ENCODE measurements at regions of chr2 and their contacts with region 1.

Region 1: GRCh38 chr2:64523666-64524603 is at the start of gene AFTPH:
- DNase-seq: peak; percentile 98
- ATAC-seq: peak; percentile 86
- H3K4me3 ChIP-seq: peak within 1 kb of the TSS; percentile 95
- H3K27ac ChIP-seq: peak within 1 kb of the TSS; percentile 94
- H3K4me1 ChIP-seq: peaks cover 11% of the 10 kb centered on the region
- H3K27me3 ChIP-seq: no peaks in the 10 kb centered on the region
- CTCF ChIP-seq: no peak
- EP300 ChIP-seq: peak in 1 of 2 experiments; percentile 53; a peak in 2 of 4 replicates
- POLR2A ChIP-seq: peak; percentile 84
- RAD21 ChIP-seq: no peak
- polyA plus RNA-seq, gene AFTPH: 25.6 to 38.7 TPM

Region 2: DNA sequence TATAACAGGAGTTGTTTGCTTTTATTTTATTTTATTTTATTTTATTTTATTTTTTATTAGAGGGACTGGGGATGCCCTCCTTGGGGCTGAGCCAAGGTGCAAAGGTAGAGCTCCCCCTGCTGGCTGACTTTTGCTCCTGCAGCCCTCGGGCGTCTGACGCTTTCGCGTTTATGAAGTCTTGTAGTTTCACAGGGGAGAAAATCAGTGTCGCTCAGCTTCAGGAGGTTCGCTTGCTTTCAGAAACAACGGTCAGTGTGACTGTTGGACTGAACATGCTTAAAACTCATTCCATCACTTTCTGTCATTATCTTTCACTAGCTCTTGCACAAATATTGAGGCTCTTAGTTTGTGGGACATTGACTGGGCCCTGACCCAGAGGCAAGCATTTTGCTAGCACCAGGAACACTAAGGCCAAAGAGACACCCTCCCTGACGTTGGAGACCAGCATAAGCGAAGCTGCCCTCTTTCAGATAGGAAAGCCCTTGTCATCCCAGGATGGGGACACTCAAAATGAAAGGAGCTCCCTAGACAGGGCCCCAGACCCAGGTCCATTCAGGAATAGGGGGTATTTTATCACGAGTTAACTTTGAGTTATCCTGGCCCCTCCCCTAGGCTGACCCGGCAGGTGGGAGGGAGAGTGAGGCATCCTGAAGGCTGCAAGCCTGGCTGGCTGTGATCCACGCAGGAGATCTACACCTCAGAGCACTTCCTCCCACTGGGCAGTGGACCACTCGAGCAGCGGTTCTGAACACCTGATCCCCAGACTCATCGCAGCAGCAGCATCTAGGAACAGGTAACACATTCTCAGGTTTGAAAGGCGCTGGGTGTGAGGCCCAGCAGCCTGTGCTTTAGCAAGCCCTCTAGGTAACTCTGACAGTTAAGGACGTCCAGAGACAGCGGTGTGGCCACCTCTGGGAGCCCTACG is 35.6 kb before region 1 on chr2:
- CTCF ChIA-PET with region 1: interaction called, 13 read pairs
- POLR2A ChIA-PET with region 1: no interaction called
- RAD21 ChIA-PET with region 1: interaction called, 3 read pairs
- SMC1A ChIA-PET with region 1: interaction called, 7 read pairs
- in situ Hi-C with region 1: no loop called
- intact Hi-C with region 1: no loop called
- DNase-seq: peak; percentile 12
- ATAC-seq: peak; percentile 94
- H3K4me3 ChIP-seq: no peak overlapping the region
- H3K27ac ChIP-seq: no peak overlapping the region
- H3K4me1 ChIP-seq: peaks cover 5% of the 10 kb centered on the region
- H3K27me3 ChIP-seq: no peaks in the 10 kb centered on the region
- CTCF ChIP-seq: peak; percentile 84 to 92 (median 91)
- EP300 ChIP-seq: no peak
- POLR2A ChIP-seq: no peak
- RAD21 ChIP-seq: peak; percentile 90

Region 3: GRCh38 chr2:64562148-64562784 is 38.3 kb after region 1 on chr2:
- CTCF ChIA-PET with region 1: interaction called, 145 read pairs
- POLR2A ChIA-PET with region 1: interaction called, 7 read pairs
- RAD21 ChIA-PET with region 1: interaction called, 93 read pairs
- SMC1A ChIA-PET with region 1: interaction called, 106 read pairs
- in situ Hi-C with region 1: no loop called
- intact Hi-C with region 1: loop called (anchors 1 kb)
- DNase-seq: no peak
- ATAC-seq: peak; percentile 70
- H3K4me3 ChIP-seq: no peak overlapping the region
- H3K27ac ChIP-seq: no peak overlapping the region
- H3K4me1 ChIP-seq: peaks cover 19% of the 10 kb centered on the region
- H3K27me3 ChIP-seq: no peaks in the 10 kb centered on the region
- CTCF ChIP-seq: peak; percentile 15 to 52 (median 39); a peak in 5 of 6 replicates
- EP300 ChIP-seq: no peak
- POLR2A ChIP-seq: no peak
- RAD21 ChIP-seq: peak; percentile 58

Region 4: DNA sequence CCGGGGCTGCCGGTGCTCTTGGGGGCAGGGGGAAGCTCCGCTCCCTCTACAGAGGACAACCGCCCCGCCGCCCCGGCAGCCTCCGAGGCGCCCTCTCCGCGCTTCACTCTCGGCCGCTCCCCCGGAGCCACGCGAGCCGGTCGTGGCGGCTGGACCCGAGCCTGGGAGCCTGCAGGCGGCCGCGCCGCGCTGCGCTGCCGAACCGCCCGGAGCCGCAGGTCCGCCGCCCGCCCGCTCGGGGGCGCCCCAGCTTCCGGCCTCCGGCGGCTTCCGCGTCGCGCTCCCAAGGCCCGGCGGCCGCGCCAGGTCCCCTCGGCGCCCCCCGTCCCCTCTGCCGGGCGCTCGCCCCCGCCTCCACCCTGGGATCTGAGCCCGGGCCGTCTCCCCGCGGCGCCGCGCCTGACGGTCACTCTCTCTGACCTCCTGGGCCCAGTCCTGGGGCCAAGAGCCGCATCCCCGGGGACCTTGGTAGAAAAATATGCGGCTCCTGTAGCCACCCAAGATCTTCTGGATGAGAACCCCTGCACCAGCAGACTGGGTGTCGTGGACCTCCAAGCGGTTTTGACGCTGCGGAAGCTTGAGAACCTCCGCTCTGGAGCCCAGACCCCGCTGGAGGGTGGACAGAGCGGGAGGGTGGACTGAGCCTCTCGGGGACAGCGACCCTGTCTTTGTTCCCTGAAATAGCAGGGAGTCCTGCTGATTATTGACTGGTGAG is 85.4 kb after region 1 on chr2:
- CTCF ChIA-PET with region 1: interaction called, 27 read pairs
- POLR2A ChIA-PET with region 1: interaction called, 15 read pairs
- RAD21 ChIA-PET with region 1: interaction called, 36 read pairs
- SMC1A ChIA-PET with region 1: interaction called, 43 read pairs
- in situ Hi-C with region 1: no loop called
- intact Hi-C with region 1: no loop called
- DNase-seq: no peak
- ATAC-seq: peak; percentile 62
- H3K4me3 ChIP-seq: peak overlapping the region; percentile 68
- H3K27ac ChIP-seq: peak overlapping the region; percentile 14; the same call in 1 of the 2 replicates
- H3K4me1 ChIP-seq: peaks cover 38% of the 10 kb centered on the region
- H3K27me3 ChIP-seq: no peaks in the 10 kb centered on the region
- CTCF ChIP-seq: peak; percentile 30 to 63 (median 33); a peak in 4 of 6 replicates
- EP300 ChIP-seq: no peak
- POLR2A ChIP-seq: peak; percentile 70
- RAD21 ChIP-seq: peak; percentile 42

Region 5: GRCh38 chr2:64653349-64654062 is 129.6 kb after region 1 on chr2 and contains the start of gene SERTAD2:
- CTCF ChIA-PET with region 1: interaction called, 17 read pairs
- POLR2A ChIA-PET with region 1: interaction called, 18 read pairs
- RAD21 ChIA-PET with region 1: interaction called, 75 read pairs
- SMC1A ChIA-PET with region 1: interaction called, 18 read pairs
- in situ Hi-C with region 1: no loop called
- intact Hi-C with region 1: no loop called
- DNase-seq: no peak
- ATAC-seq: peak; percentile 70
- H3K4me3 ChIP-seq: peak within 1 kb of the TSS; percentile 95
- H3K27ac ChIP-seq: peak within 1 kb of the TSS; percentile 81
- H3K4me1 ChIP-seq: peaks cover 51% of the 10 kb centered on the region
- H3K27me3 ChIP-seq: no peaks in the 10 kb centered on the region
- CTCF ChIP-seq: 0 out of 6 replicates have a peak, but pooled peaks of 1 of the 3 experiments have one; percentile 6
- EP300 ChIP-seq: no peak
- POLR2A ChIP-seq: peak; percentile 90
- RAD21 ChIP-seq: 0 out of 2 replicates have a peak, but pooled peaks have one; percentile 19
- polyA plus RNA-seq, gene SERTAD2: 7.9 TPM

Region 6: GRCh38 chr2:64831134-64831976 is 307.4 kb after region 1 on chr2:
- CTCF ChIA-PET with region 1: interaction called, 12 read pairs
- POLR2A ChIA-PET with region 1: no interaction called
- RAD21 ChIA-PET with region 1: no interaction called
- SMC1A ChIA-PET with region 1: no interaction called
- in situ Hi-C with region 1: no loop called
- intact Hi-C with region 1: no loop called
- DNase-seq: peak; percentile 71
- ATAC-seq: peak; percentile 96
- H3K4me3 ChIP-seq: peak overlapping the region; percentile 19; the same call in 1 of the 2 replicates
- H3K27ac ChIP-seq: peak overlapping the region; percentile 80
- H3K4me1 ChIP-seq: peaks cover 12% of the 10 kb centered on the region
- H3K27me3 ChIP-seq: no peaks in the 10 kb centered on the region
- CTCF ChIP-seq: peak; percentile 80 to 99 (median 98)
- EP300 ChIP-seq: 0 out of 4 replicates have a peak, but pooled peaks of 1 of the 2 experiments have one; percentile 10
- POLR2A ChIP-seq: no peak; the same call in none of the 2 replicates
- RAD21 ChIP-seq: peak; percentile 85

Region 7: GRCh38 chr2:64914735-64915509 is 391.0 kb after region 1 on chr2:
- CTCF ChIA-PET with region 1: interaction called, 12 read pairs
- POLR2A ChIA-PET with region 1: interaction called, 5 read pairs
- RAD21 ChIA-PET with region 1: interaction called, 8 read pairs
- SMC1A ChIA-PET with region 1: interaction called, 5 read pairs
- in situ Hi-C with region 1: no loop called
- intact Hi-C with region 1: no loop called
- DNase-seq: peak; percentile 96
- ATAC-seq: peak; percentile 68
- H3K4me3 ChIP-seq: peak overlapping the region; percentile 41
- H3K27ac ChIP-seq: peak overlapping the region; percentile 81
- H3K4me1 ChIP-seq: peaks cover 62% of the 10 kb centered on the region
- H3K27me3 ChIP-seq: no peaks in the 10 kb centered on the region
- CTCF ChIP-seq: no peak
- EP300 ChIP-seq: peak; percentile 73 to 80; a peak in 3 of 4 replicates
- POLR2A ChIP-seq: peak; percentile 72
- RAD21 ChIP-seq: no peak